ENCODE measurements at regions of chr1 and their contacts with region 1.

Region 1: GRCh38 chr1:21368515-21369289 is 71.2 kb upstream of the NBPF3 start:
- DNase-seq: peak; percentile 13 to 81 (median 51)
- ATAC-seq: peak; percentile 63 to 76 (median 69)
- H3K4me3 ChIP-seq: no peak overlapping the region
- H3K4me3 Mint-ChIP-seq: no peak overlapping the region
- H3K27ac ChIP-seq: no peak overlapping the region
- H3K27ac Mint-ChIP-seq: no peak overlapping the region
- H3K4me1 ChIP-seq: peaks cover 0 to 8% of the 10 kb centered on the region in 2 experiments
- H3K4me1 Mint-ChIP-seq: peaks cover 10 to 17% (median 12%) of the 10 kb centered on the region in 3 donors
- H3K27me3 ChIP-seq: peaks cover 0 to 2% of the 10 kb centered on the region in 2 experiments
- H3K27me3 Mint-ChIP-seq: no peaks in the 10 kb centered on the region

Region 2: GRCh38 chr1:21232044-21232443 is 136.7 kb before region 1 on chr1:
- CTCF ChIA-PET with region 1: interaction called, 7 to 22 read pairs
- POLR2A ChIA-PET with region 1: interaction called in 1 of 2 experiments, 3 read pairs
- DNase-seq: peak in 20 of 35 experiments; percentile 11 to 71 (median 22)
- ATAC-seq: peak in 3 of 4 experiments; percentile 52 to 53 (median 53)
- H3K4me3 ChIP-seq: no peak overlapping the region
- H3K4me3 Mint-ChIP-seq: no peak overlapping the region
- H3K27ac ChIP-seq: no peak overlapping the region
- H3K27ac Mint-ChIP-seq: no peak overlapping the region
- H3K4me1 ChIP-seq: no peaks in the 10 kb centered on the region
- H3K4me1 Mint-ChIP-seq: no peaks in the 10 kb centered on the region
- H3K27me3 ChIP-seq: no peaks in the 10 kb centered on the region
- H3K27me3 Mint-ChIP-seq: no peaks in the 10 kb centered on the region

Region 3: DNA sequence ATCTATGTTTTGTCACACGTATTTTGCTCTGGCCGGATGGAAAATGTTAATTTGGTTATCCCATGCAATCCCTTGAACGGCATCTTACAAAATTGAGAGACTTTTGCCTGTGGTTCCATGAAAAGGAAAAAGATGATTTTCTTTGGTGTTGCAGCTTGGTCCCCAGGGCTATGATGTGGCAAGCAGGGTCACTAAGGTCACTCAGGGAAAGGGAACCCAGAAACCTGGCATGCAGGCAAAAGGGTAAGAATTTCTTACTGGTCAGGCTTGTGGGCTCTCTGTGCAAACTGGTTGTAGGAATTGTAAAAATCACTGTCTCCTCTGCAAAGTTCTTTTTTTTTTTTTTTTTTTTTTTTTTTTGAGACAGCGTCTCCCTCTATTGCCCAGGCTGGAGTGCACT is 22.8 kb after region 1 on chr1:
- CTCF ChIA-PET with region 1: no interaction called
- POLR2A ChIA-PET with region 1: no interaction called
- DNase-seq: no peak
- ATAC-seq: no peak
- H3K4me3 ChIP-seq: no peak overlapping the region
- H3K4me3 Mint-ChIP-seq: no peak overlapping the region
- H3K27ac ChIP-seq: no peak overlapping the region
- H3K27ac Mint-ChIP-seq: no peak overlapping the region
- H3K4me1 ChIP-seq: no peaks in the 10 kb centered on the region
- H3K4me1 Mint-ChIP-seq: no peaks in the 10 kb centered on the region
- H3K27me3 ChIP-seq: peaks cover 0 to 4% of the 10 kb centered on the region in 2 experiments
- H3K27me3 Mint-ChIP-seq: peaks cover 1 to 8% of the 10 kb centered on the region in 2 donors

Region 4: GRCh38 chr1:21478974-21479373 is 110.3 kb after region 1 on chr1:
- CTCF ChIA-PET with region 1: no interaction called
- POLR2A ChIA-PET with region 1: no interaction called
- DNase-seq: no peak
- ATAC-seq: no peak
- H3K4me3 ChIP-seq: no peak overlapping the region
- H3K4me3 Mint-ChIP-seq: no peak overlapping the region
- H3K27ac ChIP-seq: no peak overlapping the region
- H3K27ac Mint-ChIP-seq: no peak overlapping the region
- H3K4me1 ChIP-seq: no peaks in the 10 kb centered on the region
- H3K4me1 Mint-ChIP-seq: no peaks in the 10 kb centered on the region
- H3K27me3 ChIP-seq: no peaks in the 10 kb centered on the region
- H3K27me3 Mint-ChIP-seq: no peaks in the 10 kb centered on the region

Region 5: DNA sequence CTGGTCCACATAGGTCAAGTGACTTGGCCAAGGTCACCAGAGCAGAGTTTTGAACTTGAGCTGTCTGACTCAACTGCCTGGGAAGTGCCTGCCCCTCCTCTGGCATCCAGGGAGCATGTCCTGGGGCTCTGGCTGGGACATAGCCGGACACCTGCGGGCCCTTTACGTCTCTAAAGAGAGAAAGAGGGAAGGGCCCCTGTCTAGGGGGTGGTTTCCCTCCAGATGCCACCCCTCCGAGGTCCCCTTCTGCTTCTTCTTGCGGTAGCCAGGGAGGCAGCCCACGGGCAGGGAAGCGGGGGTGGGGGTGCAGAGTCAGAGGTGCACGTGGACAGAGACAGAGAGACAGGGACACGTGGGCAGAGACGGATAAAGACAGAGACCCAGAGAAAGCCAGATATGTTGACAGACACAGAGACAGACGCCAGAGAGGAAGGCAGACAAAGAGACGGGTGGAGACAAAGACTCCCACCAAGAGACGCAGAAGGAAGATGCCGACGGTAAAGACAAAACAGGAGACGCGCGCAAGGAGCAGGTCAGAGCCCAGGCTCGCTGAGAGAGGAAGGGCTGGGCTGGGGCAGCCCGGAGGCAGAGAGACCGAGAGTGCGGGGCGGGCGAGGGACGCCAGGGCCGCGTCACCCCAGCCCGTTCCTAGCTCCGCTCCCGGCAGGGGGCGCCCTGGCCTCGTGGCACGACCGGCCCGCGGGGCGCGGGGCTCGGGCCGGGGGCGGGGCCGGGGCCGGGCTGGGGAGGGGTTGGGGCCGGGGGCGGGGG is 140.1 kb after region 1 on chr1:
- CTCF ChIA-PET with region 1: no interaction called
- POLR2A ChIA-PET with region 1: no interaction called
- DNase-seq: peak in 34 of 35 experiments; percentile 8 to 70 (median 45)
- ATAC-seq: peak; percentile 78 to 92 (median 85)
- H3K4me3 ChIP-seq: no peak overlapping the region
- H3K4me3 Mint-ChIP-seq: peak overlapping the region; percentile 37 to 75 (median 67)
- H3K27ac ChIP-seq: no peak overlapping the region
- H3K27ac Mint-ChIP-seq: peak overlapping the region in 1 of 2 donors; percentile 79
- H3K4me1 ChIP-seq: peaks cover 0 to 9% of the 10 kb centered on the region in 2 experiments
- H3K4me1 Mint-ChIP-seq: peaks cover 6 to 10% (median 7%) of the 10 kb centered on the region in 3 donors
- H3K27me3 ChIP-seq: peaks cover 7 to 59% of the 10 kb centered on the region in 2 experiments
- H3K27me3 Mint-ChIP-seq: peaks cover 56 to 62% of the 10 kb centered on the region in 2 donors

Measured in T-cell (primary cell).